Upper lobe of right lung (tissue), 1 donor: ENCODE measurements at regions of chr15 and their contacts with region 1.

Region 1: DNA sequence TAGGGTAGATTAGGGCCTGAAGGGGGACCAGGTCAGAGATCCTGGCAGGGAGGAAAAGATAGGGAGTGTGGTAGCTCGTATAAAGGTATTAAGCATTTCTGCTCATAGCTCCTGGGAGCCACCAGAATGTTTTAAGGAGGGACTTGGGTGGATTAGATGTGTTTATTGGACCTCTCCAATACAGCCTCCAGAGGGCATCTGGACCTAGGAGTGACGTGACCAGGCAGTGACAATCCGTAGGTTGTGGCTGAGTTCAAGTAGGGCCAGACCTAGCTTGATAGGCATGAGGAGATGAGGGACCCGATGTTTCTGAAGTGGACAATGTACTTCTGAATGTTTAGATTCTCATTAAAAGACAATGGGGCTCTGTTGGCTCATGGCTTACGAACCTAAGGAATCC is 435.2 kb downstream of the MCTP2 start:
- DNase-seq: no peak
- ATAC-seq: no peak
- H3K4me3 ChIP-seq: no peak overlapping the region
- H3K27ac ChIP-seq: no peak overlapping the region
- H3K4me1 ChIP-seq: no peaks in the 10 kb centered on the region
- H3K27me3 ChIP-seq: no peaks in the 10 kb centered on the region
- CTCF ChIP-seq: no peak

Region 2: DNA sequence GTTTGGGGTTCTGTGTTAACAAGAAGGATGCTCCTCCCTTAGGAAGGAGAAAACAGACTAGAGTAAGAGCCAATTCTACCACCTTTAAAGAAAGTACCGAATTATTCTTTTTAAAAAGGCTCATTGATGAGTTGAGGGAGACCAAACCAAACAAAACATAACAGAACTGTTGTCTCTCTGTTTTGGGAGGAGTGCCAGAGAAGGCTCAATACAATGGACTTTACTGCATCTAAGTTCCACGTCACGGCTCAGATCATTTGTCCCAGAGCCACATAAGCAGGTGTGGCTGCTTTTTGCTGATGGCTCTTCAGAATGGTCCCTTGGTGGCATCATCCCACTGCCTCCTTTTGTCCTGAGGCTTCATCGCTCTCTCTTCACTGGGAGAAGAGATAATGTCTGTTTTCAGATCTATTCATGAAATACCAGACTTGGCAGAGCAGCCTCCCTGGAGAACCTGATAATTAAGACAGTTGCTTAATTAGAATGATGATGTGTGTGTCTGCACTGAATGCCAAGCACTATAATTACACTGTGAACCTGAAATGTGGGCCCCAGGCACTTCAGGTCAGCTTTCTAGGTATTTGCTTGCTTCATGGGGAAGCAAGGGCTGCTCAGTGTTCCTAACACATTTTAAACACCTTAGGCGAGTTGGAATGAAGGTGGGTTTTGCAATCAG is 770.4 kb before region 1 on chr15:
- intact Hi-C with region 1: no loop called
- DNase-seq: no peak
- ATAC-seq: no peak
- H3K4me3 ChIP-seq: no peak overlapping the region
- H3K27ac ChIP-seq: no peak overlapping the region
- H3K4me1 ChIP-seq: no peaks in the 10 kb centered on the region
- H3K27me3 ChIP-seq: no peaks in the 10 kb centered on the region
- CTCF ChIP-seq: no peak

Region 3: GRCh38 chr15:94743668-94744067 is 77.1 kb after region 1 on chr15:
- intact Hi-C with region 1: no loop called
- DNase-seq: no peak
- ATAC-seq: no peak
- H3K4me3 ChIP-seq: no peak overlapping the region
- H3K27ac ChIP-seq: no peak overlapping the region
- H3K4me1 ChIP-seq: no peaks in the 10 kb centered on the region
- H3K27me3 ChIP-seq: no peaks in the 10 kb centered on the region
- CTCF ChIP-seq: no peak

Region 4: DNA sequence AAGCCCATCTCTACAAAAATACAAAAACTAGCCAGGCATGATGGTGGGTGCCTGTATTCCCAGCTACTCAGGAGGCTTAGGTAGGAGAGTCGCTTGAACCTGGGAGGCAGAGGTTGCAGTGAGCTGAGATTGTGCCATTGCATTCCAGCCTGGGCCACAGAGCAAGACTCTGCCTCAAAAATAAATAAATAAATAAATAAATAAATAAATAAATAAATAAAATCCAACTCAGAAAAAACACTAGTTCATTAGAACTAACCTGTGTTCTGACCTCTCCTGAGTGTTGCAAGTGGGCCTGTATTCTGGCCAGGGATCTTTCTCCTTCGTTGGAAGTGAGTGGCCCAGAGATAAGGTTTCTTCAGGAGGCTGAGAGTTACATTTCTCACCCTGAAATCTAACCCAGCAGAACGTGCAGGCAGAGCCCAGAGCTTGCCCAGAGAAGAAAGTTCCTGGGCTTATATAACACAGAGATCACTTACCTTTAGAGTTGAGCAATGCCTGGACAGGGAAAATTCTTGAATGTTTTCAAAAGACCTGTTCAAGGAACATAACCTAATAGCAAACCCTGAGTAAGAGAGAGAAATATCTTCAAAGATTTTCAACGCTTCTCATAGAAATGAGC is 148.7 kb after region 1 on chr15:
- intact Hi-C with region 1: no loop called
- DNase-seq: no peak
- ATAC-seq: peak; percentile 43
- H3K4me3 ChIP-seq: no peak overlapping the region
- H3K27ac ChIP-seq: no peak overlapping the region
- H3K4me1 ChIP-seq: no peaks in the 10 kb centered on the region
- H3K27me3 ChIP-seq: no peaks in the 10 kb centered on the region
- CTCF ChIP-seq: no peak

Region 5: DNA sequence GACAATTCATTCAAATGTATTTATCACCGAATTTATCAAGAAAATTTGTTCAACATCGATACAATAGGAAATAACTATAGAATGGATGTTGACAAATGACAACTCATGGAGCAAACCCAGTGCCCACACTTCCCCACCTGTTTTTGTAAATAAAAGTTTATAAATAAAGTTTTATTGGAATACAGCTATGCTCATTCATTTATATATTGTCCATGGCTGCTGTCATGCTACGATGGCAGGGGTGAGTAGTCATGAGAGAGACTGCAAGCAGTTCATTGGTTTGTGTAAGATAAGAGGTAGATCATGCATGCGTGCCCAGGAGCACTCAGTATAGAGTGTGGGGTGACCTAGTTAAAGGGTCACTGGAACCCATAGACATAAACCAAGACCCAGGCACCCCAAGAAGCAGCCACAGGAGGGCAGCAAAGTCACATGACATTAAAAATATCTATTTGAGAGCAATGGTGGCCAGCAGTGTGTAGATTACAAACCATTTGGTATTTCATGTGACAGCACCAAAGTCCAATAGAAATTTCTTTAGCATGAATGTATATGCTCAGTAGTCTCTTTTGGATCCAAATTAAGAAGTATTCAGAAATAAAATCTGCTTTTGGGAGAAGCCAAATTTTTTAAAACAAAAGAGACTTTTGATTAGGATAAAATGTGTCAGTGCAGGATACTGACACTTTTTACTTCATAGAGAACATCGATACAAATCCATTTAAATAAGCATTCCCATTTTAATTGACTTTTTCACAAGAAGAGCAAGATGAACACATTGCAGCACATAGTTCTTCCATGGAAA is 359.6 kb after region 1 on chr15:
- intact Hi-C with region 1: loop called (anchors 10 kb)
- DNase-seq: no peak
- ATAC-seq: peak; percentile 25
- H3K4me3 ChIP-seq: no peak overlapping the region
- H3K27ac ChIP-seq: no peak overlapping the region
- H3K4me1 ChIP-seq: no peaks in the 10 kb centered on the region
- H3K27me3 ChIP-seq: no peaks in the 10 kb centered on the region
- CTCF ChIP-seq: peak; percentile 61